ENCODE measurements at regions of chr17 and their contacts with region 1.

Region 1: GRCh38 chr17:75784473-75785015 is at the start of gene UNK:
- DNase-seq: peak; percentile 89
- ATAC-seq: peak; percentile 73
- H3K4me3 Mint-ChIP-seq: peak within 1 kb of the TSS; percentile 86
- H3K27ac Mint-ChIP-seq: peak within 1 kb of the TSS; percentile 99
- H3K4me1 Mint-ChIP-seq: peaks cover 57% of the 10 kb centered on the region
- H3K27me3 Mint-ChIP-seq: no peaks in the 10 kb centered on the region
- CTCF ChIP-seq: no peak
- total RNA-seq, gene UNK: 52.3 and 61.2 TPM in 2 replicates

Region 2: DNA sequence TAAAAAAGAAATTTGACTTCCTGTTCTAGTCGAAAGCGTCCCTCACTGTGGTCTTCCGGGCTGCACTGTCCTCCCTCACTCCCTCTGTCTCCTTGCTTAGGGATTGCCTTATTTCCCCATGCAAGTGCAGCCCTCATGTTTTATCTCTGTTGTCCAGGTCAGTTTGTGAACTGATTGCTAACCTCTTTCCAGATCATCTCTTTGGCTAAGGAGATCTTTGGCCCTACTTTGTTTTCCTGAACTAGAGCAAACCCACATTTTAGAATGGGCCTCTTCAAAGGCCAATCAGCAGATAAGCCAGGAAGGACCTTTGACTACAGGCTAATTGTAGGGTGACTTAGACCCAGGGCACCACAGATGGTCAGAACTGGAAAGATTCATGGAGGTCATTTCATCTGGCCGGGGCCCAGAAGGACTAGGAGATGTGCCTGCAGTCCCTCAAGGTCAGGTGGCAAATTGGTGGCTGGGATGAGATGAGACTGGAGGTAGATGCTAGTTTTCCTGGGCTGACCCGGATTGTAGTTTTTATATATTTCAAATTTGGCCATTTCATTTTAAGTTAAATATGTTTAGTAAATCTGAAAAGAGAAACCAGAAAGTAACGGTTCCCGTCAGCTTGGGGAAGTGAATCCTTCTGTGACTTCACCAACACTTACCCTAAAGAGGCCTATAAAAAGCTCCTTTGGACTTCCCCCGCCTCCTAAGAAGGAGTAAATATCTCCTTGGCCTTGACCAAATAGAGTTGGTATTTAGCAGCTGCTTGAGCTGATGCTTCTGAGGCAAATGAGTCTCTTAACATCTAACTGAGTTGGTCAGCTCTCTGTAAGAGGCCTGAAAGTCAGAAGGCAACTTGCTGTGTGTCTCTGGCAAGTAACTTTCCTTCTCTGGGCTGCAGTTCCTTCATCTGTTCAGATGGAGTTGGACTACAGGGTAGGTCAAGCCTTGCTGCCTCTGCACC is 489.1 kb before region 1 on chr17:
- CTCF ChIA-PET with region 1: no interaction called
- POLR2A ChIA-PET with region 1: interaction called, 7 read pairs
- intact Hi-C with region 1: loop called (anchors 5 kb)
- DNase-seq: peak; percentile 46
- ATAC-seq: peak; percentile 64
- H3K4me3 Mint-ChIP-seq: peak overlapping the region; percentile 76
- H3K27ac Mint-ChIP-seq: peak overlapping the region; percentile 100
- H3K4me1 Mint-ChIP-seq: peaks cover 77% of the 10 kb centered on the region
- H3K27me3 Mint-ChIP-seq: no peaks in the 10 kb centered on the region
- CTCF ChIP-seq: no peak

Region 3: GRCh38 chr17:75764711-75765421 is 19.7 kb before region 1 on chr17 and contains the start of gene GALK1:
- CTCF ChIA-PET with region 1: interaction called, 9 read pairs
- POLR2A ChIA-PET with region 1: interaction called, 91 read pairs
- intact Hi-C with region 1: loop called (anchors 1 kb)
- DNase-seq: peak; percentile 74
- ATAC-seq: peak; percentile 95
- H3K4me3 Mint-ChIP-seq: peak within 1 kb of the TSS; percentile 81
- H3K27ac Mint-ChIP-seq: peak within 1 kb of the TSS; percentile 53
- H3K4me1 Mint-ChIP-seq: peaks cover 16% of the 10 kb centered on the region
- H3K27me3 Mint-ChIP-seq: no peaks in the 10 kb centered on the region
- CTCF ChIP-seq: no peak
- total RNA-seq, gene GALK1: 14.9 and 22.9 TPM in 2 replicates

Region 4: DNA sequence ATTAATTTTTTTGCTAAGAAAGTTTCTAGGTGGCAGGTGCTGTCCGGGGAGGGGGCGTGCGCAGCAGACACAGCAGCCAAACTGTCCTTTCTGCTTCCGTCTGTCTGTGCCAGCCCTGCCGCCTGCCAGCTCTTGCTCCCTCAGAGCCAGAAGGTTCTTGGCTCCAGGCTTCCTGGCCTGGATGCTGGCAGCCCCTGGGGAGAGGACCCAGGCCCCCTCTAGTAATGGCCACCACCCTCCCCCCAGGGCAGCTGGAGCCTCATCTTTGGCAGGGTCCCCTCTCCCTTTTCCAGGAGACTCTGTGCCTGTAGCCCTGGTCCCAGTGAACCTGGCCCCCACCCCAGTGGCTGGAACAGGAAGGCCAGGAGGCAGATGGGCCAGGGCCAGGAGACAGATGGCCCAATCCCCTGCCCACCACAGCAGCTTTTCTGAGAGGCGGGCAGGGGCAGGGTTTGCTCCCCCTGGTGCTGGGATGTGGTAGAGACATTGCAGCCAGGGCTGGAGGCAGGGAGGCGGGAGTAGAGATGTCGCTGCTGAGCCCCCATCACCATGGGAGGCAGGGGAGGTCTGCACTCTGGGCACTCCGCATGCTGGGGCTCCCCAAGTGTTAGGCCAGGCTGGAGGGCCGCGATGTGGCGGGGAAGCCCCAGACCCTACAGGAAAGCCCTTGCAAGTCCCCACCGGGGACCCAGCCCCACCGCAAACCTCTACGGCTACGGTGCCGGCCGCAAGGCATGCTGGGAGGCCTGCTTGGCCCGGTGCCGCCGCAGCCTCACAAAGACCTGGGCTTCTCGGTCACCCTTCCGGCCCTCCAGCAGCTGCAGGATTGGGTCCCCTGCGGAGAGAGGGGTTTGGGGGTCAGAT is 42.9 kb after region 1 on chr17:
- CTCF ChIA-PET with region 1: interaction called, 7 read pairs
- POLR2A ChIA-PET with region 1: interaction called, 90 read pairs
- intact Hi-C with region 1: loop called (anchors 1 kb)
- DNase-seq: peak; percentile 64
- ATAC-seq: peak; percentile 85
- H3K4me3 Mint-ChIP-seq: peak overlapping the region; percentile 64
- H3K27ac Mint-ChIP-seq: peak overlapping the region; percentile 79
- H3K4me1 Mint-ChIP-seq: peaks cover 16% of the 10 kb centered on the region
- H3K27me3 Mint-ChIP-seq: no peaks in the 10 kb centered on the region
- CTCF ChIP-seq: no peak

Region 5: DNA sequence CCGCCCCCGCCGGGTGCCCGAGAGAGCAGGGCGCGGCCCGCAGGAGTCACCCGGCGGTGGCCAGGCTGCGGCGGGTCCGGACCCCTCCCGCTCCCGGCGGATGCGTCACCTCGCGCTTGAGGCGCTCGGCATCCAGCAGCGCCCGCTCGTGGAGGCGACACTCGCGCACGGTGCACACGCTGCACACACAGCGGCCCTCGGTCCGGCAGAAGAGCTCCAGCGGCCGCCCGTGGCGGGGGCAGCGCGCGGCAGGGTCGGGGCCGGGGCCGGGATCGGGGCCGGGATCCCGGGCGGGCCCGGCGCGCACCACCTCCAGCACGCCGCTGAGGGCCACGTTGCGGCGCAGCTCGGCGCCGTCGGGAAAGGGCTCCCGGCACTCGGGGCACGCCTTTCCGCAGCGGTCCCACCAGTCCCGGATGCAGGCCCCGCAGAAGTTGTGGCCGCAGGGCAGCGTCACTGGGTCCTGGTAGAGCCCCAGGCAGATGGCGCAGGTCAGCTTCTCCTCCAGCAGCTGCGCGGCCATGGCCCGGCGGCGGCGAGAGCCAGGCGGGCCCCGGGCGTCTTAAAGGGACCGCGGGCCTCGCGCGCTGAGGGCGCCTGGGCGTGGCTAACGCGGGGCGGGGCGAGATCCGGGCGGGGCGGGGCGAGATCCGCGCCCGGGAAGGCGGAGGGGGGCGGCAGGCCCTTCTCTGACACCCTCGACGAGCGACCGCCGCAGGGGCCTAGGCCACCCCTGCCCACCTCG is 112.0 kb after region 1 on chr17 and contains the start of gene TRIM65:
- CTCF ChIA-PET with region 1: interaction called, 4 read pairs
- POLR2A ChIA-PET with region 1: interaction called, 27 read pairs
- intact Hi-C with region 1: loop called (anchors 2 kb)
- DNase-seq: peak; percentile 86
- ATAC-seq: peak; percentile 85
- H3K4me3 Mint-ChIP-seq: peak within 1 kb of the TSS; percentile 82
- H3K27ac Mint-ChIP-seq: peak within 1 kb of the TSS; percentile 73
- H3K4me1 Mint-ChIP-seq: peaks cover 27% of the 10 kb centered on the region
- H3K27me3 Mint-ChIP-seq: no peaks in the 10 kb centered on the region
- CTCF ChIP-seq: no peak
- total RNA-seq, gene TRIM65: 20.0 and 22.4 TPM in 2 replicates

Region 6: GRCh38 chr17:75933808-75934207 is 149.3 kb after region 1 on chr17:
- CTCF ChIA-PET with region 1: no interaction called
- POLR2A ChIA-PET with region 1: no interaction called
- intact Hi-C with region 1: no loop called
- DNase-seq: no peak
- ATAC-seq: no peak
- H3K4me3 Mint-ChIP-seq: no peak overlapping the region
- H3K27ac Mint-ChIP-seq: no peak overlapping the region
- H3K4me1 Mint-ChIP-seq: no peaks in the 10 kb centered on the region
- H3K27me3 Mint-ChIP-seq: no peaks in the 10 kb centered on the region
- CTCF ChIP-seq: no peak

Region 7: DNA sequence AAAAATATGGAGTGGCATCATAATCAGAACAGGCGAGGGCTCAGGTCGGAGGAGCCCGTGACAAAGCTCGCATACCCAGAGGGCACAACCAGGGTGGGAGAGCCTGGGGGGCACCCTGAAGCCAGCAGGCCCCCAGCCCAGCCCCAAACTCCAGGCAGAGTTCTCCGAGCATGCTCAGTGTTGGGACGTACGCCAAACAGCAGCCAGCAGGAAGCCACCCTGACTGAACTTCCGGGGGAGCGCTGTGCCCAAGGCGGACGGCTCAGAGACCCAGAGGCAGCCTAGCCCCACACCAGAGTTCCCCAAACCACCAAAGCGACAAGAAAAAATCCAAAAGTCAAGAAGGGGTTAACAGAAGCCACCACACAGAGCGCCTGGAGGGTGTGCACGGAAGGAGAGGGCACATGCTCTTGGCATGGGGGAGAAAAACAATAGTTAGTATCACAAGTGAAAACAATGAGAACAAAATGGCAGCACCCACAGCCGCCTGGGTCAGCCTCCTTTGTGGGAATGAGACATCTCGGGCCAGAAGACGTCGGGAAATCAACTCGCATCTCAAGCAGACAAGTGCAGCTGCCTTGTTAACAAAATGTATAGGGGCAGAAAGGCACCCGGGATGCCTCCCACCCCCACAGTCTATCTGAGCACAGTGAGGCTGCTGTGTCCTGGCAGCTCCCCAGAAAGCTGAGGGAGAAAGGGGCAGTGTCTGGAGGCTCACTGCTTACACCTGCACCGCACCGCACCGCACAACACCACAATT is 307.2 kb after region 1 on chr17:
- CTCF ChIA-PET with region 1: no interaction called
- POLR2A ChIA-PET with region 1: no interaction called
- intact Hi-C with region 1: no loop called
- DNase-seq: no peak
- ATAC-seq: no peak
- H3K4me3 Mint-ChIP-seq: no peak overlapping the region
- H3K27ac Mint-ChIP-seq: no peak overlapping the region
- H3K4me1 Mint-ChIP-seq: no peaks in the 10 kb centered on the region
- H3K27me3 Mint-ChIP-seq: no peaks in the 10 kb centered on the region
- CTCF ChIP-seq: no peak

Measured in activated B cell treated with CpG ODN at 0.5 μM for 24 hours (primary cell).